Activated naive CD8-positive, alpha-beta T cell treated with anti-CD3 and anti-CD28 coated beads, Interleukin-2, amount 10 ng/mL, durations not matched to agents 7 days and 5 days (primary cell): ENCODE measurements at regions of chr19 and their contacts with region 1.

Region 1: DNA sequence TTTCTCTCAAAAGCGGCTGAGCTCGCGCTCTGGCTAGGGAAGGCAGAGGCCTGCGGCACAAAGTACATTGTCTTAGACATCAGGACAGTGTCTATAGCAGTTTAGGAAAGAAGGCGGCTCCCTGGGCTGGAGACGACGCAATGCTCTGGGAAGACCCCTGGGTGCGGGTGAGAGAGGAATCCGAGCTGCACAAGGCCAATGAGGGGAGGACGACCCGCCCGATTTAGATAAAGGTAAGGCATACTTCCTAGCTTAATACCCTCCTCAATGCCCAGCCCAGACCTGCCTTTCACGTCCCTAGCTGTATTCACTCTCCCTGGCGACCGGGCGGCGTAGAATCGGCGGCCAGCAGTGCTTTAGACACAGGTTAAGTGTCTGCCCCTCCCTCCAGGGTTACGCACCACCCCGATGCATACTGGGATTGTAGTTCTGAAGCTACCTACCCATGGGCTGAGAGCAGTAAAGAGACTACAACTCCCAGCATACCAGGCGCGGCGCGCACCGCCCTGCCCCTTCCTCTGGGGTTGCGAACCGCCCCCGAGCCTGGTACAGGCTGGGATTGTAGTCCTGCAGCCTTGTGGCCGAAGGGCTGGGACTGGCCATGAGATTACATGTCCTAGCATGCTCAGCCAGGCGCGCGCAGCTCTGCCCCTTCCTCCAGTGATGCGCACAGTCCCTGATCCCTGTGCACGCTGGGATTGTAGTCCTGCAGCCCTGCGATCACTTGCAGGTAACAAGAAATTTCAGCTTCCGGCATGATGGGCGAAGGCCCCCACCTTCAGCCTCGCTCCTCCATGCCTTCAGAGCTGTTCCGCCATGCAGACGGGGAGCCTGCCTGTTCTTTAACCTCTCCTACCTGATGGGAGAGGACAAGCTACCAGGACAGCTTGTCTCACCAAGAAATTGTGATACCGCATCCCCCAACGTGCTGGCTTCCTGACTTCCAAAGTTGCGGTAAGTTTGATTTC is 43.4 kb upstream of the ZNF14 start:
- DNase-seq: peak; percentile 90
- ATAC-seq: peak; percentile 99
- H3K4me3 Mint-ChIP-seq: peak overlapping the region; percentile 93
- H3K27ac Mint-ChIP-seq: peak overlapping the region; percentile 89
- H3K4me1 Mint-ChIP-seq: peaks cover 26% of the 10 kb centered on the region
- H3K27me3 Mint-ChIP-seq: no peaks in the 10 kb centered on the region

Region 2: DNA sequence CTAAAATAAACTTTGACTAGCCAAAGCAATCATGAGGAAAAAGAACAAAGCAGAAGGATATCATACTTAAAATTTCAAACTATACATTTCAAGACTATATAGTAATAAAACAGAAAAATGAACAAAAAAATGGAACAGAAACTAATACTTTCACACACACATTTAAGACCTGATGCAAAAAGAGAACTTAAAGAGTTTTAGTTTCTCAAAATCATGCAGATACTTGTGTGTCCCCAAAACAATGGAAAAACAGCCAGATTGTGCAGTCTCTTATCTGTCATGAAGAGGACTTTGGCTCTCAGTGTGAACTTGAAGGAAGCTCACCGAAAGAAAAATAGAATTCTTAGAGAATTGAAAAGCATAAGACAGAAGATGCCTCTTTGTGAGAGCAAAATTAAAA is 29.2 kb after region 1 on chr19:
- POLR2A ChIA-PET with region 1: no interaction called
- DNase-seq: no peak
- ATAC-seq: no peak
- H3K4me3 Mint-ChIP-seq: no peak overlapping the region
- H3K27ac Mint-ChIP-seq: no peak overlapping the region
- H3K4me1 Mint-ChIP-seq: peaks cover 6% of the 10 kb centered on the region
- H3K27me3 Mint-ChIP-seq: no peaks in the 10 kb centered on the region

Region 3: DNA sequence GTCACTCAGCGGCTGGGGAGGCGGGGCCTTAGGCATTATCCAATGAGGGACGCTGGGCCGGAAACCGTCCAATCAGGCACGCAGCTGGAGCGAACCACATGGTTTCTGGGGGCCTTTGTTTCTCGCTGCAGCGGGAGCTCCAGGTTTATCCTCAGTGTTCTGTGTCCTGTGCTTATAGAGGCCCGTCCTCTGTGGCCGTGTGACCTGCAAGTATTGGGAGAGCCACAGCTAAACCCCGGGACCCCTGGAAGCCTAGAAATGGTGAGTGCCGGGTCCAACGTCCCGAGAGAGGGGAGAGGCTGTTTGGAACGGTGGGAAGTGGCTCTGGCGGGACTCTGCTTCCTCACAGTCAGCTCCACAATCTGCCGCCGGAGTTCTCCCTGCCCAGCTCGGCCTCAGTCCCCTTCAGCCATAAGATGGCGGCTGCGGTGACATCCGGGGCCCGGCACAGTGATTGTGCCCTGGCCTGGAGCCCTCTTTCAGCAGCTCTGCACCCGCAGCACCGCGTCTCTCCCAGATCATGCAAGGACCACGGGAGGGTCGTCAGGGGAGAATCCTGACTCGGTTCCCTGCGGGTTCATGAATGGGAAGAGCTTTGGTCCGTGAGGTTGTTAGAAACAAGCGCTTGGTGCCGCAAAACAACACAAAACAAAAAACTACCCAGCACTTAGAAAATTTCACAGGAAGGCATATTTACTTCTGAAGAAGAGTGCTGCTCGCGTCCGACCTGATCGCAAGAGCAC is 89.6 kb after region 1 on chr19 and contains the start of gene ZNF253:
- POLR2A ChIA-PET with region 1: interaction called, 36 read pairs
- DNase-seq: peak; percentile 91
- ATAC-seq: peak; percentile 93
- H3K4me3 Mint-ChIP-seq: peak within 1 kb of the TSS; percentile 97
- H3K27ac Mint-ChIP-seq: peak within 1 kb of the TSS; percentile 98
- H3K4me1 Mint-ChIP-seq: peaks cover 13% of the 10 kb centered on the region
- H3K27me3 Mint-ChIP-seq: no peaks in the 10 kb centered on the region
- total RNA-seq, gene ZNF253: 25.6 to 32.4 TPM